Uterus (tissue), 4 donors: ENCODE measurements at regions of chr5 and their contacts with region 1.

Region 1: GRCh38 chr5:152532714-152533113 is 127.6 kb upstream of the NMUR2 start:
- DNase-seq: no peak
- H3K4me3 ChIP-seq: no peak overlapping the region
- H3K27ac ChIP-seq: no peak overlapping the region
- H3K4me1 ChIP-seq: no peaks in the 10 kb centered on the region
- H3K27me3 ChIP-seq: no peaks in the 10 kb centered on the region
- CTCF ChIP-seq: peak; percentile 36 to 56 (median 45)
- POLR2A ChIP-seq: no peak

Region 2: DNA sequence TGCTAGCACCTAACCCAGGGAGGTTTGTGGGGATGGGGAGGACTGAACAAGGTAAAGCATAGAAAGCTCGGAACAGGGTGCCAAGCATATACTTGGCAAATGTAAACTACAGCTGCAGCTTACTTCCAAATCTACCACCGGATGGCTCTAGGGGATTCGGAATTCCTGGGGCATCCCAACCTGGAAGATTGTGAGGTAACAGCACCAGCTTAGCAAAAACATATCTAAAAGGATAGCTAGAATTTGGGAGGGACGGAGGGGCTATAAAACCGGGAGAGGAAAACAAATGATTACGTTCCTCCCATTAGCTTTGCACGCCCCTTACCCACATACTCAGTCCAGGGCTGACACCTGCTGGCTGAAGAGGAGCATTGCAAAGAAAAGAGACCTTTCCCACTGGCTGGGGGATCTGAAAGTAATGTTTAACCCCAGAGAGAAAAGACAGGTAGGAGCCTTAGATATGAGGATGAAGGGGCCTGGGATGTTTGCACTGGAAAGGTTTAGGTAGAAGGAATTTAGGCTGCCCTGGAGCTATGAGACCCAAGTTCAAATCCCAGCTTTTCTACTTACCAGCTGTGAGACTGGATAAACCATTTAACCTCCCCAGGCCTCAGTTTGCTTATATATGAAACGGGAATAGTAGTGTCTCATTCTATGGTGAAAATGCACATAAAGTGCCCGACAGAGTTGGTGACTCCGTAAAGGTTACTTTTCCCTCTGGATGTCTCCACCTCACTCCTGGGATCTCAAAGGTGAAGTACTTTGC is 1432.3 kb after region 1 on chr5:
- intact Hi-C with region 1: loop called (anchors 10 kb)
- DNase-seq: peak; percentile 25 to 26
- H3K4me3 ChIP-seq: no peak overlapping the region
- H3K27ac ChIP-seq: no peak overlapping the region
- H3K4me1 ChIP-seq: no peaks in the 10 kb centered on the region
- H3K27me3 ChIP-seq: no peaks in the 10 kb centered on the region
- CTCF ChIP-seq: peak; percentile 67 to 86 (median 80)
- POLR2A ChIP-seq: no peak